ENCODE measurements at regions of chr7 and their contacts with region 1.

Region 1: GRCh38 chr7:127708788-127709187 is 56.8 kb downstream of the SND1 start:
- DNase-seq: peak; percentile 47 to 83 (median 75)
- ATAC-seq: peak; percentile 76
- H3K4me3 ChIP-seq: no peak overlapping the region
- H3K4me3 Mint-ChIP-seq: no peak overlapping the region
- H3K27ac ChIP-seq: no peak overlapping the region
- H3K27ac Mint-ChIP-seq: no peak overlapping the region
- H3K4me1 ChIP-seq: no peaks in the 10 kb centered on the region
- H3K4me1 Mint-ChIP-seq: no peaks in the 10 kb centered on the region
- H3K27me3 ChIP-seq: no peaks in the 10 kb centered on the region
- H3K27me3 Mint-ChIP-seq: no peaks in the 10 kb centered on the region
- CTCF ChIP-seq: peak; percentile 60

Region 2: DNA sequence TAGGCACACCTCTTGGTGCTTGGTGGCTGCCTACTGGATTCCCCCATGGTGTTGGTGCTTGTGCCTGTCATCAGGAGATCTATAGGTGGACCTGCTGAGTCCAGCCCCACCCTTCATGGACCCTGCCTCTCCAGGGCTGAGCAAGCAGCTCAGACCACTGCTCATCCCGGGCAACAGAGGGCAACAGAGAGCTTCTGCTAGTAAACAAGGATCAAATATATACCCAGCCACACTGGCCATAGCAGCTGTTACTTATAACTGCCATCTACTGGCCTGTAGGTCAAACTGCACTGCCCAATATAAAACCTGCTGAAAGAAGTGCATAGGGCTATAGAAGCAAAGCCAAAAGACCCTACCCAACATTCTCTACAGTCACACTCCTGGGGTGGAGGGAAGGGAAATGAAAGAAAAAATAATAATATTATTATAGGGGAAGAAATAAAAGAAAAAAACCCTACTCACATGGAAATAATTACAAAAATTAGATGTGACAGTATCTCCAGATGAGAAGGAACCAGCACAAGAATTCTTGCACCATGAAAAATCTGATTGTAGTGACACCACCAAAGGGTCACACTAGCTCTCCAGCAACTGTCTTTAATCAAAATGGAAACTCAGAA is 261.4 kb before region 1 on chr7:
- CTCF ChIA-PET with region 1: no interaction called
- POLR2A ChIA-PET with region 1: no interaction called
- intact Hi-C with region 1: no loop called
- DNase-seq: peak in 8 of 9 experiments; percentile 25 to 85 (median 50)
- ATAC-seq: peak; percentile 99
- H3K4me3 ChIP-seq: no peak overlapping the region
- H3K4me3 Mint-ChIP-seq: no peak overlapping the region
- H3K27ac ChIP-seq: no peak overlapping the region
- H3K27ac Mint-ChIP-seq: no peak overlapping the region
- H3K4me1 ChIP-seq: peaks cover 13% of the 10 kb centered on the region
- H3K4me1 Mint-ChIP-seq: peaks cover 20% of the 10 kb centered on the region
- H3K27me3 ChIP-seq: no peaks in the 10 kb centered on the region
- H3K27me3 Mint-ChIP-seq: peaks cover 6% of the 10 kb centered on the region
- CTCF ChIP-seq: peak; percentile 78

Region 3: DNA sequence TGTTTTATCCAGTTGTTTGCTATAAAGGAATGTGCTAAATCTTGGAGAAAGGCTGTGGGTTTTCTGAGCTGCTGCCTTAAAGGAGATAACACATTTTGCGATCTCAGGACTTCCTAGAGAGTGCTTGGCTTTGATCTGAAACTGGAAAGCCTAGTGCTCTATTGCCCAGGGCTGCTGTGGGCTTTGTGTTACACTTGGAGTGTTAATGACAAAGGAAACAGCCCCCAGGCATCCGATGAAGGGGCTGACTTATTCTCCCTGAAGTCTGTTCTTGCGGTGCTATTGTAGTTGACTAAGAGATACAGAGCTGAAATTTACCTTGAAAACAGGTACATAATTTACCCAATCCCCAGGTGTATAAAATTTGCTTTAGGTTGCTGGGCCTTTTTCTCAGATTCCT is 17.7 kb after region 1 on chr7:
- CTCF ChIA-PET with region 1: interaction called, 20 read pairs
- POLR2A ChIA-PET with region 1: interaction called, 3 read pairs
- intact Hi-C with region 1: no loop called
- DNase-seq: no peak
- ATAC-seq: no peak
- H3K4me3 ChIP-seq: no peak overlapping the region
- H3K4me3 Mint-ChIP-seq: no peak overlapping the region
- H3K27ac ChIP-seq: no peak overlapping the region
- H3K27ac Mint-ChIP-seq: no peak overlapping the region
- H3K4me1 ChIP-seq: no peaks in the 10 kb centered on the region
- H3K4me1 Mint-ChIP-seq: no peaks in the 10 kb centered on the region
- H3K27me3 ChIP-seq: no peaks in the 10 kb centered on the region
- H3K27me3 Mint-ChIP-seq: no peaks in the 10 kb centered on the region
- CTCF ChIP-seq: no peak

Region 4: DNA sequence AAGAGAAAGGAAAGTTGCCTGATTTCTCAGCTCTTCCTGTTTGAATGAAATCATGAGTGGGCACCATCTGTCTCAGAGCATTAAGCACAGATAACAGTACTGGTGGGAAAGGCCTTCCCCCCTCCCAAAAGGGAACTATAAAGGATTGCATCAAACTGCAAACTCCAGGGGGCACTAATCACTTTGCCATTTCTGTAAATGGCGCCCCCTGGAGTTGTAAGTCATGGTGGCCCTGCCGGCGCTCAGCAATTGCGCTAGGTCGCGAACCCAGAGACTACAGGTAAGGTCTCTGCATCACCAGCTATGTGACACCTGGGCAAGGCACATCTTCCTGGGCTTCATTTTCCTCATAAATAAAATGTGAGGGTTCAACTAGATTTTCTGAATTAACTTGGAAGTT is 311.4 kb after region 1 on chr7:
- CTCF ChIA-PET with region 1: interaction called, 10 read pairs
- POLR2A ChIA-PET with region 1: no interaction called
- intact Hi-C with region 1: loop called in 1 of 2 experiments (anchors 5 kb)
- DNase-seq: peak in 2 of 9 experiments; percentile 38 to 45
- ATAC-seq: no peak
- H3K4me3 ChIP-seq: no peak overlapping the region
- H3K4me3 Mint-ChIP-seq: no peak overlapping the region
- H3K27ac ChIP-seq: no peak overlapping the region
- H3K27ac Mint-ChIP-seq: no peak overlapping the region
- H3K4me1 ChIP-seq: no peaks in the 10 kb centered on the region
- H3K4me1 Mint-ChIP-seq: peaks cover 4% of the 10 kb centered on the region
- H3K27me3 ChIP-seq: no peaks in the 10 kb centered on the region
- H3K27me3 Mint-ChIP-seq: no peaks in the 10 kb centered on the region
- CTCF ChIP-seq: no peak

Region 5: DNA sequence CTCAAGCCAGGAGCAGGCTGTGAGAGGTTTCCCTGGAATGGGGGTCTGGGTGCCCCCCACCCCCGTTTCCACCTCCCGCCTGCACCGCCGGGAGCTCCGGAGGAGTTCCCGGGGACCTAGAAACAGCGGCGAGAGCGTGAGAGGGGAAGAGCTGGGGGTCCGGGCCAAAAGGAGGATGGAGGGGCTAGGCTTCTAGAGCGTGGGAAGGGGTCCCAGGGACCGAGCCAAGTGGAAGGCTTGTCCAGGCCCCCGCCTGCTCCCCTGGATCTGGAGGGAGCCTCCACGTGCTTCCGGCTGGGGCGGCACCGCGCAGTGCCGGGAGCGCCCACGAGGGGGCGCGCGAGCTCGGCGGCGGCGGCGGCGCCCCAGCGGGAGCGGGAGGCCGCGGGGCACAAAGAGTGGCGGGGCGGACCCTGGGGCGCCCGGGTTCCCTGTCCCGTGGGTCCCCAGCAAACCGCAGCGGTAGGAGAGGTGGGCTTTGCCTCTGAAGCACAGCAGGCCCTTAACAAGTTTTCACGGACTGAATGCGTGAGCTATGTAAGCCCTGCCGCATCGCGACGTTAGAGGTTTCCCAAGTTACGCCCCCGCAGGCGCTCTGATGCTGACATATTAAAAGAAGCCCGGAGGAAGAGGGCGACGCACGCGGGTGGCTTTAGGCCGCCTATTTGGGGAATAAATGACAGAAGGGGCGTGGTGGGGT is 426.9 kb after region 1 on chr7:
- CTCF ChIA-PET with region 1: interaction called, 12 read pairs
- POLR2A ChIA-PET with region 1: no interaction called
- intact Hi-C with region 1: loop called in 1 of 2 experiments (anchors 2 kb)
- DNase-seq: peak; percentile 33 to 81 (median 46)
- ATAC-seq: peak; percentile 95
- H3K4me3 ChIP-seq: peak overlapping the region; percentile 62 to 66
- H3K4me3 Mint-ChIP-seq: peak overlapping the region; percentile 82
- H3K27ac ChIP-seq: no peak overlapping the region
- H3K27ac Mint-ChIP-seq: no peak overlapping the region
- H3K4me1 ChIP-seq: peaks cover 14% of the 10 kb centered on the region
- H3K4me1 Mint-ChIP-seq: peaks cover 17% of the 10 kb centered on the region
- H3K27me3 ChIP-seq: peaks cover 0 to 21% of the 10 kb centered on the region in 2 experiments
- H3K27me3 Mint-ChIP-seq: peaks cover 22% of the 10 kb centered on the region
- CTCF ChIP-seq: peak; percentile 91

Region 6: GRCh38 chr7:128322040-128322643 is 613.4 kb after region 1 on chr7:
- CTCF ChIA-PET with region 1: interaction called, 18 read pairs
- POLR2A ChIA-PET with region 1: no interaction called
- intact Hi-C with region 1: loop called (anchors 1 kb)
- DNase-seq: peak in 5 of 9 experiments; percentile 18 to 77 (median 32)
- ATAC-seq: peak; percentile 79
- H3K4me3 ChIP-seq: no peak overlapping the region
- H3K4me3 Mint-ChIP-seq: peak overlapping the region; percentile 36
- H3K27ac ChIP-seq: peak overlapping the region in 1 of 2 experiments; percentile 80
- H3K27ac Mint-ChIP-seq: peak overlapping the region; percentile 91
- H3K4me1 ChIP-seq: peaks cover 39% of the 10 kb centered on the region
- H3K4me1 Mint-ChIP-seq: peaks cover 43% of the 10 kb centered on the region
- H3K27me3 ChIP-seq: no peaks in the 10 kb centered on the region
- H3K27me3 Mint-ChIP-seq: no peaks in the 10 kb centered on the region
- CTCF ChIP-seq: peak; percentile 36